ENCODE measurements at regions of chr4 and their contacts with region 1.

Region 1: GRCh38 chr4:109729718-109730618 is at the start of gene PLA2G12A:
- DNase-seq: peak; percentile 68
- H3K4me3 Mint-ChIP-seq: peak within 1 kb of the TSS; percentile 84
- H3K27ac Mint-ChIP-seq: peak within 1 kb of the TSS; percentile 62
- H3K4me1 Mint-ChIP-seq: peaks cover 19% of the 10 kb centered on the region
- H3K27me3 Mint-ChIP-seq: peaks cover 2% of the 10 kb centered on the region
- total RNA-seq, gene PLA2G12A: 11.3 and 13.1 TPM in 2 replicates

Region 2: GRCh38 chr4:109389369-109390114 is 340.4 kb before region 1 on chr4:
- intact Hi-C with region 1: no loop called
- DNase-seq: no peak
- H3K4me3 Mint-ChIP-seq: no peak overlapping the region
- H3K27ac Mint-ChIP-seq: no peak overlapping the region
- H3K4me1 Mint-ChIP-seq: peaks cover 9% of the 10 kb centered on the region
- H3K27me3 Mint-ChIP-seq: peaks cover 9% of the 10 kb centered on the region

Region 3: GRCh38 chr4:109708990-109709389 is 21.0 kb before region 1 on chr4:
- intact Hi-C with region 1: no loop called
- DNase-seq: no peak
- H3K4me3 Mint-ChIP-seq: no peak overlapping the region
- H3K27ac Mint-ChIP-seq: no peak overlapping the region
- H3K4me1 Mint-ChIP-seq: peaks cover 4% of the 10 kb centered on the region
- H3K27me3 Mint-ChIP-seq: no peaks in the 10 kb centered on the region

Region 4: DNA sequence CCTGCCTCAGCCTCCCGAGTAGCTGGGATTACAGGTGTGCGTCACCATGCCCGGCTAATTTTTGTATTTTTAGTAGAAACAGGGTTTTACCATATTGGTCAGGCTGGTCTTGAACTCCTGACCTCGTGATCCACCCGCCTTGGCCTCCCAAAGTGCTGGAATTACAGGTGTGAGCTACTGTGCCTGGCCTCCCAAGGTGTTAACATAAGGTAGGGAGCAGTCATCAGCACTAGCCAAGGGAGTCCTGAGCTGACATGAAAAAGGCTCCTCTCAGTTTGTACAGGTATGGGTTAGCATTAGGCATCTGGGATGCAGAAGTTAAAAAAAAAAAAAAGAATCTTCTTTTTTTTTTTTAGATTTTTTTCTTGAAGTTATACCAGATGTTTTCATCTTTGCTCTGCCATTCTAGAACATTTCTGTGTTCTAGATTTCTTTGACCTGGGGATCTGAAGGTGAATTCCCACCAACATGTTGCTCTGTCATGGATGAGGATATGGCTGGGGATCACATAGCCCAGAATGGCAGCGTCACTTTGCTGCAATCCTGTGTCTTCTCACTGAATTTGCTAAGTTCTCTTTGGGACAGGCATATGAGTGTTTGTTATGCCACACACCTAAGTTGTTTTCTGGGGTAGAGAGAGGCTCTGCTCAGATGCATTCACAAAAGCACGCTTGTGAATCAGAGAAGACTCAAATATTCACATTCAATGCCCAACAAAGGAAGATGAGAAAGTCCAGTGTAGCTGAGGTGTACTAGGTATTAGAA is 24.3 kb after region 1 on chr4:
- intact Hi-C with region 1: loop called (anchors 1 kb)
- DNase-seq: no peak
- H3K4me3 Mint-ChIP-seq: no peak overlapping the region
- H3K27ac Mint-ChIP-seq: no peak overlapping the region
- H3K4me1 Mint-ChIP-seq: no peaks in the 10 kb centered on the region
- H3K27me3 Mint-ChIP-seq: peaks cover 6% of the 10 kb centered on the region

Region 5: DNA sequence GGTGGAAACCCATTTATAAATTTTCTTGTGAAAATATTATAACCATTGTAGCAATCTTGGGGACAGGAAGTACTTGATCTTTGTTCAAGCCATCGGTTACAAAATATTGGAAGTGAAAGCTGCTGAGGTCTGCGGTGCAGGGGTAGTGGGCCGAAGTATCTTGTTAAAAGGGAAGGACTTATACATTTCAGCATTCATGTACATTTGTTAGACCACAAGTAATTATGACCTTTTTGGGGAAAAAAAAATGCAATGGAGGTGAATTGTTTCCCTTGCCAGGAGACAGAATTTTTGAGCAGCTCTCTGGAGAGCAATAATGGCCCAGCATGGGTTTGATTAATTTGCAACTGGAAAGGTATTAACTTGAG is 304.0 kb after region 1 on chr4:
- intact Hi-C with region 1: no loop called
- DNase-seq: no peak
- H3K4me3 Mint-ChIP-seq: no peak overlapping the region
- H3K27ac Mint-ChIP-seq: no peak overlapping the region
- H3K4me1 Mint-ChIP-seq: peaks cover 14% of the 10 kb centered on the region
- H3K27me3 Mint-ChIP-seq: peaks cover 26% of the 10 kb centered on the region